Activated CD4-positive, alpha-beta T cell treated with anti-CD3 and anti-CD28 coated beads for 36 hours (primary cell): ENCODE measurements at regions of chr2 and their contacts with region 1.

Region 1: GRCh38 chr2:197851451-197851850 is 47.1 kb downstream of the PLCL1 start:
- DNase-seq: no peak
- ATAC-seq: no peak
- H3K4me3 Mint-ChIP-seq: no peak overlapping the region
- H3K27ac Mint-ChIP-seq: no peak overlapping the region
- H3K4me1 Mint-ChIP-seq: peaks cover 84% of the 10 kb centered on the region
- H3K27me3 Mint-ChIP-seq: no peaks in the 10 kb centered on the region

Region 2: DNA sequence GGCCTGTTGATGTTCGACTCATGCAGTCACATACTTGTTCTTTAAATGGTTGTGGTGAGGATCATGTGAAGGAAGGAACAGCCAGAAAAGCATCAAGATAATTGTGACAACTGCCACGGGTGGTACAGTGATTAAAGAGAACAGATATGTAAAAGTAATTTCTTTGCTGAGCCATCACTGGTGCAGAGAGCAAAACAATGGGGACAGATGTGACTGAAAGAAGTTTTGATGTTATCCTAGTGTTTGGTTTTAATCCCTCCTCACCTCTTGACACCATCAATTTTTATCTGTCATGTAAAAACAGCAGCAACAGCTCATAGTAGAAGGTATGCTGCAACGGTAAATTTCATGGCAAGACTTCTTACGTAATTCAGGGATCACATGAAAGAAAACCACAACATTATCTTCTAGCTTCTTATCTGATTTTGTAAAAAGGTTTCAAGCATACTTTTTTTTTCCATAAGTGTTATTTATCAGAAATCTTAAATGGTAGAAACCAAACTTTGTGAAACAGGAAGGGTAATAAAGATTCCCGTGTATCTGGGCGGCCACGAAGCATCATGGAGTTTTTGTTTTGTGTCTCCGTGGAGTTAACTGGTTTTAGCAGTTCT is 18.2 kb after region 1 on chr2:
- CTCF ChIA-PET with region 1: interaction called, 8 read pairs
- POLR2A ChIA-PET with region 1: interaction called, 4 read pairs
- intact Hi-C with region 1: loop called in 1 of 2 experiments (anchors 2 kb)
- DNase-seq: peak; percentile 33
- ATAC-seq: peak; percentile 65
- H3K4me3 Mint-ChIP-seq: peak overlapping the region; percentile 72
- H3K27ac Mint-ChIP-seq: peak overlapping the region; percentile 94
- H3K4me1 Mint-ChIP-seq: peaks cover 70% of the 10 kb centered on the region
- H3K27me3 Mint-ChIP-seq: no peaks in the 10 kb centered on the region

Region 3: DNA sequence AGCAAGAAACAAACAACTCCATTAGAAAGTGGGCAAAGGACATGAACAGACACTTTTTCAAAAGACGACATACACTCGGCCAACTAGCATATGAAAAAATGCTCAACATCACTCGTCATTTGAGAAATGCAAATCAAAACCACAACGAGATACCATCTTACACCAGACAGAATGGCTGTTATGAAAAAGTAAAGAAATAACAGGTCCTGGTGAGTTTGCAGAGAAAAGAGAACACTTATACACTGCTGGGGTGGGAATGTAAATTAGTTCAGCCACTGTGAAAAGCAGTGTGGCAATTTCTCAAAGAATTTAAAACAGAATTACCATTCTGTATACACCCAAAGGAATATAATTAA is 83.5 kb after region 1 on chr2:
- CTCF ChIA-PET with region 1: no interaction called
- POLR2A ChIA-PET with region 1: no interaction called
- intact Hi-C with region 1: no loop called
- DNase-seq: no peak
- ATAC-seq: peak; percentile 76
- H3K4me3 Mint-ChIP-seq: peak overlapping the region; percentile 65
- H3K27ac Mint-ChIP-seq: peak overlapping the region; percentile 67
- H3K4me1 Mint-ChIP-seq: peaks cover 54% of the 10 kb centered on the region
- H3K27me3 Mint-ChIP-seq: no peaks in the 10 kb centered on the region

Region 4: GRCh38 chr2:198053776-198054698 is 202.6 kb after region 1 on chr2:
- CTCF ChIA-PET with region 1: interaction called, 3 read pairs
- POLR2A ChIA-PET with region 1: no interaction called
- intact Hi-C with region 1: loop called (anchors 5 kb)
- DNase-seq: peak; percentile 70
- ATAC-seq: peak; percentile 95
- H3K4me3 Mint-ChIP-seq: no peak overlapping the region
- H3K27ac Mint-ChIP-seq: peak overlapping the region; percentile 7
- H3K4me1 Mint-ChIP-seq: peaks cover 29% of the 10 kb centered on the region
- H3K27me3 Mint-ChIP-seq: no peaks in the 10 kb centered on the region

Region 5: DNA sequence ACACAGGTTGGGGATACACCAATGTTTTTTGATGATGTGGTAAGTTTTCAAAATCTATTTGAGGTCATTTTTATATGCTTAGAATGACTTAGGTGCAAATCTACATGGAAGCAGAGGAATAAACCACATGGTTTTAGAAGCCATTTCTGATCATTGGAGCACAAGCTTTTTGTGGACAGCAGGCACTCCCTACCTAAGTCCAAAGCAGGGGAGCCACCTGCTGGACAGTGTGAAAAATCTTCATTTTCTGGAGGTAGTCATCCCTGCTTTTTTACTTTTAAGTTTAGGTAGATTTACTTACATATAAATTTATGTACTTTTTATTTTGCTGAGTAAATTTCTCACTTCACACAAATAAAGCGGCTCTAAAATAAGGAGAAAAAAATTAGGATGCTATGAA is 276.2 kb after region 1 on chr2:
- CTCF ChIA-PET with region 1: interaction called, 3 read pairs
- POLR2A ChIA-PET with region 1: no interaction called
- intact Hi-C with region 1: loop called (anchors 1 kb)
- DNase-seq: peak; percentile 71
- ATAC-seq: peak; percentile 72
- H3K4me3 Mint-ChIP-seq: no peak overlapping the region
- H3K27ac Mint-ChIP-seq: no peak overlapping the region
- H3K4me1 Mint-ChIP-seq: peaks cover 8% of the 10 kb centered on the region
- H3K27me3 Mint-ChIP-seq: no peaks in the 10 kb centered on the region